ENCODE measurements at regions of chr9 and their contacts with region 1.

Region 1: GRCh38 chr9:125541840-125542243 is 165.2 kb downstream of the MAPKAP1 start:
- DNase-seq: no peak
- H3K4me3 ChIP-seq: no peak overlapping the region
- H3K27ac ChIP-seq: no peak overlapping the region
- H3K4me1 ChIP-seq: no peaks in the 10 kb centered on the region
- H3K27me3 ChIP-seq: no peaks in the 10 kb centered on the region

Region 2: DNA sequence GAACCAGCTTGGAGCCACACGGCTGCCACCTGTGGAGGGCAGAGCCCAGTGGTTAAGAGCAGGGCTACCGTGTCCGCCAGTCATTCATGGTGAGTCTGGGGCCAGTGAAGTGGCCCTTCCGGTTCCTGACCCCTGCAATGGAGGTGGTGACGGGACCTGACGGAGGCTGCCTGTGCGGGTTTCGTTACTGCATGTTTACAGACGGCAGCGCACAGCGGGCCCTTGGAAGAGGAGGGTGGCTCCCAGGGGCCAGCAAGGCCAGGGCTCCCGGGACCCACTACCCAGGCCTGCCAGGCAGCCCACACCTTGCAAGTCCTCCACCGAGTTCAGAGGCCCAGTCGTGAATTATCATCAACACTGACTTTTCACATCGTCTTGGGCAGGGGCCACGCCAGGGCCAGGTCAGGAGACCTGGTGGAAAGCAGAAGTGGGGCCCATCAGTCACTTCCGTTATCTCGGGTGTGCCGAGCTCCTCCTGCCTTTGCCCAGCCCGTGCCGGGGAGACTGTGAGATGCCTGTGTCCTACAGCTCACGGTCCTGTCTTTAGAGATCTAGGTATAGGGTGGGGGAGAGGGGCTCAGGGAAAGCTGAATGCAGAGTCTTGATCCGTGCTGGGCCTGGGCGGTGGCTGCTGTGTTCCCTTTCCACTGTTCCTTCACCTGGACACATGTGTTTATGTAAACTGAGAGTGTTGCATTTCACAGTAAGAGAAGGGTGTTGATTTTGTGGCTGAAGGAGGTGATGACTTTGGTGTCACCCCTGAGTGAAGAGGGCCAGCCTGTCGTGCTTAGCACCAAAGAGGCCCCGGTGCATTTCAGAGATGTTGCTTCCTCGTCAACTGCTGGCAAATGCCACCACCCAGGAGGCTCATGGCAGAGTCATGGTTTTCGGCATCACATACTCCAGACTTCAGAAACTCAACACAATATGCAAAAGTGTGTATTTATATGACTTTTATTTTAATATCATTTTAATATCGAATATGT is 105.1 kb before region 1 on chr9:
- CTCF ChIA-PET with region 1: no interaction called
- POLR2A ChIA-PET with region 1: no interaction called
- DNase-seq: peak in 2 of 3 donors; percentile 33 to 50
- H3K4me3 ChIP-seq: no peak overlapping the region
- H3K27ac ChIP-seq: no peak overlapping the region
- H3K4me1 ChIP-seq: peaks cover 0 to 9% (median 0%) of the 10 kb centered on the region in 4 experiments
- H3K27me3 ChIP-seq: no peaks in the 10 kb centered on the region

Region 3: DNA sequence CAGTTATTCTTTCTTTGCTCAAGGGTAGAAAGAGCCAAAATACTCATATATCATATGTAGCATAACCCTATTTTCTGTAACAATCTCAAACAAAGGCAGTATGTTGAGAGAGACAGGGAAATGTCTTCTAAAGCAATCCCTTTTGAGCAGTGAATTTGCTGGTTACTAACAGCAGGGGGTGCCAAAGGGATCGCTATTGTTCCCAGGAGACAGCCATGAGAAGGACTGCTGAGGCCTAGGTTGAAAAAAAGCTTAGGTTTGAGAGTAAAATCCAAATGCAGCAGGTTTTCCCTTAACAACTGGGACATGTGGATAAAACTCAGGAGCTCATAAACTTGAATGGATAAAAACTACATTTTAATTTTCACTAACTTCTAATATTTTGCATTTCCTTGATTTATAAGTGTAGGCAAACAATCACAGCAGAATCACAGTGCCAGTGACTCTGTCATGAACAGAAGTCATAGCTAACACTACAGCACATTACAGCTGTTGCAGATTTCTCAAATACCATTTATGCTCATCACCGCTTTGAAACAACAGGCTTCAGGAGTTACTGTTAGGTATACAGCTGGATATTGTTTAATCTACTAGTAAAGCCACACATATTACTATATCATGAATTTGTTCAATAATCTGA is 16.7 kb after region 1 on chr9:
- CTCF ChIA-PET with region 1: interaction called, 11 read pairs
- POLR2A ChIA-PET with region 1: no interaction called
- DNase-seq: peak; percentile 71 to 88 (median 84)
- H3K4me3 ChIP-seq: no peak overlapping the region
- H3K27ac ChIP-seq: no peak overlapping the region
- H3K4me1 ChIP-seq: no peaks in the 10 kb centered on the region
- H3K27me3 ChIP-seq: no peaks in the 10 kb centered on the region

Measured in common myeloid progenitor, CD34-positive (primary cell).